Dorsolateral prefrontal cortex (tissue), 120 donors: ENCODE measurements at regions of chr12 and their contacts with region 1.

Region 1: DNA sequence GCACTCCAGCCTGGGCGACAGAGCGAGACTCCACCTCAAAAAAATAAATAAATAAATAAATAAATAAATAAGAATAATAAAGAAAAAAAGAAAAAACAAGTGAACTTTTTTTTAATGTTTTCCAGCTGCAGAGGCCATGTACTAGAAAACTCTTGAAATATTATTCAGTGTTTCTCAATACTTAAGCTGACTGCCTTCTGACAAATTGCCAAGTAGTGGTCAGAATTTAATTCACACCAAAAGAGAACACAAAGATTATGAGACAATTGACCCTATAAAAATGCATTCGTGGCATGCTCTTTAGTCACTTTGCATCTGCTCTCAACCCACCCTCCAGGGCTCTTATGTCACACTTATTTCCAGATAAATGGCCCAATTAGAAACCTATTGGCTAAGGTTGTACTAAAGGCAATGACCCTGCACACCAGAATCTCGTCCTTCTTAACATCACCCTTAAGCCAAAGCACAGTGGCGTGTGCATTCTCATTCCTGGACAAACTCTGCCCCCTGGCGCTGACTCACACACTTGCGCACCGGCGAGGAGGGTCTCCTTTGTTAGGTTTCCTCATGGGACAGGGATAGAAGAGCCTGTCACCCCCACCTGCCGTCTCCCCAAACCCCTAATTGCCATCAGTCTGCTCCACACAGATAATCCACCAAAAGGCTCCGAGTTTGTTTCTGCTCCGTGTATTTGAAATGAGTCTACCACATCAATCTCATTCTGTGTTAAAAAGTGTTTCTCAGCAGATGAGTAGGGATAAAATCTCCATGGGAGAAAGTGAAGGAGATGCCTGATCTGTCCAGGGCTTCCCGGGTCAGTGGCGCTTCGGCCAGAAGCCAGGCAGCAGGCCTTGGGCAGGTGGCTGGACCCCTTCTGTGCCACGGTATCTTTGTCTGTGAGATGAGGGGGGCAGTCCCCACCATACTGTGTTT is 73.1 kb upstream of the CEP83 start:
- DNase-seq: peak; percentile 49 to 84 (median 65)
- H3K4me3 ChIP-seq: peak overlapping the region in 1 of 59 donors; percentile 18
- H3K27ac ChIP-seq: peak overlapping the region in 1 of 59 donors; percentile 18
- H3K27me3 ChIP-seq: no peaks in the 10 kb centered on the region
- CTCF ChIP-seq: peak; percentile 58 to 95 (median 86)

Region 2: DNA sequence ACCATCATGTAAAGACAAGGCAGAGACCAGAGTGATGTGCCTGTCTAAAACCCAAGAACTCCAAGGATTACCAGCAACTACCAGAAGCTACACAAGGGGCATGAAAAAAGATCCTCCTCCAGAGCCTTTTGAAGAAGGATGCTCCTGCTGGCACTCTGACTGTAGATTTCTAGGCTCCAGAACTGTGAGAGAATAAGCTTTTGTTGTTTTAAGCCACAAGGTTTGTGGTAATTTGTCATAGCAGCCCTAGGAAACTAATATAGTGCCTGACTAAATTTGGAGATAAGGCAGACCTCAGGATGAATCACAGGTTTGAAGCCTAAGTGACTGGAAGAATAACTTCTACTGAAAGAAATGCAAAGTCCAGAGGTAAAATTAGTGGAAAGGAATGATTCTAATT is 206.0 kb before region 1 on chr12:
- intact Hi-C with region 1: loop called in 1 of 2 experiments (anchors 5 kb)
- DNase-seq: no peak
- H3K4me3 ChIP-seq: no peak overlapping the region
- H3K27ac ChIP-seq: no peak overlapping the region
- H3K27me3 ChIP-seq: no peaks in the 10 kb centered on the region
- CTCF ChIP-seq: no peak

Region 3: DNA sequence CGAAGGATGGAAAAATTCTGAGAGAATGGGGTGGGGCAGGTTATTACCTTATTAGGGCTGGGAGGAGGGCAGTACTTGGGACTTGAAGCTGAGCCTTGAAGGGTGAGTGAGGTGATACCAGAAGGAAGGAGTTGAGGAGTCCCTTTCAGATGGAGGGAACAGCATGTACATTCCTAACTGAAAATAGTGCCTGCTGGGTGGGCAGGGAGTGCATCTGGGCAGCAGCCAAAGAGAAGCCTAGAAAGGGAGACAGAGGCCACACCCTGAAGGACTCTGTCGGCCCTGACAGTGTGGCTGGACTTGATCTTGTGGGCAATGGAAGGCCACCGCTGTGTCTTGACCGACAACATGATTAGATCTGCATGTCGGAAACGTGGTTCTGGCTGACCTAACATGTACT is 323.1 kb after region 1 on chr12:
- intact Hi-C with region 1: no loop called
- DNase-seq: no peak
- H3K4me3 ChIP-seq: no peak overlapping the region
- H3K27ac ChIP-seq: no peak overlapping the region
- H3K27me3 ChIP-seq: no peaks in the 10 kb centered on the region
- CTCF ChIP-seq: no peak